Activated CD4-positive, alpha-beta T cell treated with anti-CD3 and anti-CD28 coated beads, Interleukin-2, amount 10 ng/mL, durations not matched to agents 24 days and 14 days (primary cell): ENCODE measurements at regions of chr3 and their contacts with region 1.

Region 1: GRCh38 chr3:18369551-18370185 is 55.5 kb downstream of the SATB1 start:
- DNase-seq: no peak
- H3K4me3 Mint-ChIP-seq: no peak overlapping the region
- H3K27ac Mint-ChIP-seq: peak overlapping the region; percentile 63
- H3K4me1 Mint-ChIP-seq: peaks cover 62% of the 10 kb centered on the region
- H3K27me3 Mint-ChIP-seq: no peaks in the 10 kb centered on the region

Region 2: GRCh38 chr3:18351823-18352744 is 17.6 kb before region 1 on chr3:
- intact Hi-C with region 1: loop called (anchors 2 kb)
- DNase-seq: no peak
- H3K4me3 Mint-ChIP-seq: no peak overlapping the region
- H3K27ac Mint-ChIP-seq: peak overlapping the region; percentile 25
- H3K4me1 Mint-ChIP-seq: peaks cover 19% of the 10 kb centered on the region
- H3K27me3 Mint-ChIP-seq: no peaks in the 10 kb centered on the region